OCI-LY7 (cell line): ENCODE measurements at regions of chr18 and their contacts with region 1.

Region 1: GRCh38 chr18:5350636-5351035 is 55.1 kb upstream of the ZBTB14 start:
- DNase-seq: no peak
- H3K4me3 ChIP-seq: no peak overlapping the region
- H3K27ac ChIP-seq: no peak overlapping the region
- H3K4me1 ChIP-seq: no peaks in the 10 kb centered on the region
- CTCF ChIP-seq: no peak

Region 2: GRCh38 chr18:5253910-5254309 is 96.7 kb before region 1 on chr18:
- CTCF ChIA-PET with region 1: no interaction called
- POLR2A ChIA-PET with region 1: no interaction called
- intact Hi-C with region 1: no loop called
- DNase-seq: no peak
- H3K4me3 ChIP-seq: no peak overlapping the region
- H3K27ac ChIP-seq: no peak overlapping the region
- H3K4me1 ChIP-seq: peaks cover 11% of the 10 kb centered on the region
- CTCF ChIP-seq: no peak

Region 3: DNA sequence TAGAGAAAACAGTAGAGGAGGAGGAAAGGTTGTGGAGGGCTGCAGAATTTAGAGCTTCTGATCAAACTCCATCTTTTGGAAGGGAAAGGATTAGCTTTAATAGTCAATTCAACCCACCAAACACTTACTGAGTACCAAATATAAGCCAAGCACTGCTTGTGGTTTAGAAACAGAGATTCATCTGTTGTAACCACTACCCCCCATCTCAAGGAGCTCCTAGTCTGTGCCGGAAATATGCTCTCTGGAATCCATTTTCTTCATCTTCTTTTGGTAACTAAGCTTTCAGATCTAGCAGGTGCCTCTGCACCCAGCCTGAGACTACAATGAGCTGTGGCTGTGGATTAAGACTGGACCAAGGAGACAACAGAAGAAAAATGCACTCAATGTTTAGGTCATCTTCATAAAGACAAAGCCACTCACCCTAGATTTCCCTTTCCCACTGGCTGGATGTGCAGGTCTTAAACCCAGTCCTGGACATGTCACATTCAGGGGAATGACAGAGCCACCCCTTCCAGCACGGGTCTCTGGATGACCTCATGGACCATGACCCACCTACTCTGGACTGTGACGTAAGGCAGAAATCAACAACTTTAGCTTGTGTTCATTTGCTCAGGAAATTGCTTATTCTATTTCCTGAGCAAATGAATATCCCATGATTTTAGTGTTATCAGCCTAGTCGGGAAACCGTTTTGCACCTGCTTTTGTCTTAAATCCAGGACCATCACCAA is 140.3 kb after region 1 on chr18:
- CTCF ChIA-PET with region 1: no interaction called
- POLR2A ChIA-PET with region 1: no interaction called
- intact Hi-C with region 1: loop called (anchors 10 kb)
- DNase-seq: no peak
- H3K4me3 ChIP-seq: no peak overlapping the region
- H3K27ac ChIP-seq: no peak overlapping the region
- H3K4me1 ChIP-seq: no peaks in the 10 kb centered on the region
- CTCF ChIP-seq: no peak

Region 4: DNA sequence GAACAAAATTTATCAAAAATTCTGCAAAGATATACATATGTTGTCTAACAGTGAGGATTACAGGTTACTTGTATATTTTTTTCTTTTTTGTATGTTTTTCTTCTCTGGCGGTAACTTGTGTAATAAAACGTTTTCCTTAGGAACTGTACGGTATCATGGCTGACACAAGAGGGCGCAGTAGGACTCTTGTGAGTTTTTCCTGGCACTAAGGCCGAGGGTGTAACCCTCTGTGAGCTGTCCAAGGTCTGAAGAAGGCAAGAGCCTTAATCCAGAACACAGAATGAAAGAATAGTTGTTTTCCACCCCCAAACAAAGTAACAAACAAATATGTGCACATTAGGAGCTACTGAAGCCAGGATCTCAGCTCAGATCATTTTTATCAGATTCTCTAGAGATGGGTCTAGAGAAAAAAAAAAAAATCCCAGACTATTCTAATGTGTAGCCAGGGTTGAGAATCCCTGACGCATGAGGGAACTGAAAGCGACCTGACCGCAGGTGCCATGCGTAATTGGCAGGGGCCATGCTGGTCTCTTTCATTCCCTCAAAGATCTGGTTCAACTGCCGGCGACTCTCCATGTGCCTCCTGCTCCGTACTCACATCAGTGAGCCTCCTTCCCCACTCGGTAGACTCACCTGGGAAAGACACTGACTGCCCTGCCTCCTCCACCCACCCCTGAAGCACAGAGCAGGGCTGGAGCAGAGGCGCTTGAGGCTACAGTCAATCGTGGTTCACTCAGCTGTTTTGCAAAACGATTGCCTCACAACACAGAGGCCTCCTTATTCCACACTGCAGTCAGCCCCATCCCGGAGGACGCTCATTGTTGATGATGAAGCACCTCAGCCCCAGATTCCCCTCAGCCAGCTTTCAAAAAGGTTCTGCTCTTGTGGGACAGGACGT is 517.8 kb after region 1 on chr18:
- CTCF ChIA-PET with region 1: no interaction called
- POLR2A ChIA-PET with region 1: no interaction called
- intact Hi-C with region 1: no loop called
- DNase-seq: peak; percentile 62
- H3K4me3 ChIP-seq: no peak overlapping the region
- H3K27ac ChIP-seq: no peak overlapping the region
- H3K4me1 ChIP-seq: no peaks in the 10 kb centered on the region
- CTCF ChIP-seq: peak; percentile 86